ENCODE measurements at regions of chr1 and their contacts with region 1.

Region 1: DNA sequence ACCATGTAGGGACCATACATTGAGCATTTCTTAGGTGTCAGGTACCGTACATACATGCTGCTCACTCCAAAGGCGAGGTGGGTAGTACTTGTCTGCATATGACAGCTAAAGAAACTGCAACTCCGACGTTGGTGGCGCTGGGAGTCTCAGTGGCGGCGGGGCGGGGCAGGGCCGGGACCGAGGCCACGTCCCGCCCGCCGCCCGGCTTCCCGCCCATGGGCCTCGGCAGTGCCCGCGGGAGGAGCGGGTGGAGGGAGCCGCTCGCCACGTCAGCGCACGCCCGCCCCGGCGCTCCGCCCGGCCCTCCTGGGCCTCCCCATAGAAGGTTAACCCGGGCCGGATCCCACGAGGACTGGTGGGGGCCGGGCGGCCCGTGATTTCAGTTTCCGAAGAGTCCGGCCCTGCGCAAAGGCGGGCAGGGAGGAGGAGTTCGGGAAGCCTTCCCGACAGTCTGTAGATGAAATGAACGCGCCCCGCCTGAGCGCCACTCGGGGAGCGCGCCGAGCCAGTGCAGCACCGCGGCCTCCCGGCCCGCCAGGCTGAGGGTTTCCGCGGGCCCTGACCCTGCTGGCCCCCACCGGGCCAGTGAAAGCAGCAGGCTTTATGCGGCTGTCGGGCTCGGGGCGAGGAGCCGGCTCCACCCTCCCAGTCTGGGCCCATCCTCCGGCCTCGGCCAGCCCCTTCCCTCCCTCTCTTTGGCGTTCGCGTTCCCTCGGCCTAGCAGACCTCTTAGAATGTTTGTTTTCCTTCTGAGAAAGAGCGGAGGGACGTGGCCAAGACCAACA is 119.9 kb upstream of the JUN start:
- DNase-seq: peak; percentile 96
- ATAC-seq: peak; percentile 92

Region 2: GRCh38 chr1:58816072-58816746 is 87.5 kb before region 1 on chr1:
- intact Hi-C with region 1: loop called (anchors 10 kb)
- DNase-seq: peak; percentile 93
- ATAC-seq: peak; percentile 92

Measured in sciatic nerve (tissue), 2 donors.